AG04450 (cell line): ENCODE measurements at regions of chr2 and their contacts with region 1.

Region 1: GRCh38 chr2:223779877-223780276 is 57.5 kb downstream of the AP1S3 start:
- DNase-seq: no peak
- H3K4me3 ChIP-seq: no peak overlapping the region
- H3K27ac ChIP-seq: no peak overlapping the region
- H3K27me3 ChIP-seq: no peaks in the 10 kb centered on the region
- CTCF ChIP-seq: peak; percentile 30

Region 2: GRCh38 chr2:223692191-223692947 is 87.5 kb before region 1 on chr2:
- CTCF ChIA-PET with region 1: interaction called, 12 read pairs
- POLR2A ChIA-PET with region 1: no interaction called
- DNase-seq: no peak
- H3K4me3 ChIP-seq: no peak overlapping the region
- H3K27ac ChIP-seq: no peak overlapping the region
- H3K27me3 ChIP-seq: no peaks in the 10 kb centered on the region
- CTCF ChIP-seq: peak; percentile 83